Activated T-helper 2 cell treated with anti-CD3 and anti-CD28 coated beads, Interferon-gamma antibody, Interleukin-2, Interleukin-4, amounts not matched to agents 10 μg/mL and 5 μg/mL and 100 μg/mL, durations not matched to agents 14 hours and 24 hours and 36 hours (primary cell): ENCODE measurements at regions of chr3 and their contacts with region 1.

Region 1: GRCh38 chr3:72818092-72818773 is 30.0 kb downstream of the SHQ1 start:
- DNase-seq: no peak
- H3K4me3 Mint-ChIP-seq: no peak overlapping the region
- H3K27ac Mint-ChIP-seq: no peak overlapping the region
- H3K4me1 Mint-ChIP-seq: peaks cover 40% of the 10 kb centered on the region
- H3K27me3 Mint-ChIP-seq: no peaks in the 10 kb centered on the region

Region 2: GRCh38 chr3:71710906-71711494 is 1107.2 kb before region 1 on chr3:
- intact Hi-C with region 1: loop called (anchors 5 kb)
- DNase-seq: no peak
- H3K4me3 Mint-ChIP-seq: no peak overlapping the region
- H3K27ac Mint-ChIP-seq: no peak overlapping the region
- H3K4me1 Mint-ChIP-seq: peaks cover 40% of the 10 kb centered on the region
- H3K27me3 Mint-ChIP-seq: no peaks in the 10 kb centered on the region

Region 3: GRCh38 chr3:71930056-71930991 is 887.9 kb before region 1 on chr3:
- intact Hi-C with region 1: loop called (anchors 5 kb)
- DNase-seq: no peak
- H3K4me3 Mint-ChIP-seq: no peak overlapping the region
- H3K27ac Mint-ChIP-seq: no peak overlapping the region
- H3K4me1 Mint-ChIP-seq: peaks cover 6% of the 10 kb centered on the region
- H3K27me3 Mint-ChIP-seq: peaks cover 8% of the 10 kb centered on the region

Region 4: DNA sequence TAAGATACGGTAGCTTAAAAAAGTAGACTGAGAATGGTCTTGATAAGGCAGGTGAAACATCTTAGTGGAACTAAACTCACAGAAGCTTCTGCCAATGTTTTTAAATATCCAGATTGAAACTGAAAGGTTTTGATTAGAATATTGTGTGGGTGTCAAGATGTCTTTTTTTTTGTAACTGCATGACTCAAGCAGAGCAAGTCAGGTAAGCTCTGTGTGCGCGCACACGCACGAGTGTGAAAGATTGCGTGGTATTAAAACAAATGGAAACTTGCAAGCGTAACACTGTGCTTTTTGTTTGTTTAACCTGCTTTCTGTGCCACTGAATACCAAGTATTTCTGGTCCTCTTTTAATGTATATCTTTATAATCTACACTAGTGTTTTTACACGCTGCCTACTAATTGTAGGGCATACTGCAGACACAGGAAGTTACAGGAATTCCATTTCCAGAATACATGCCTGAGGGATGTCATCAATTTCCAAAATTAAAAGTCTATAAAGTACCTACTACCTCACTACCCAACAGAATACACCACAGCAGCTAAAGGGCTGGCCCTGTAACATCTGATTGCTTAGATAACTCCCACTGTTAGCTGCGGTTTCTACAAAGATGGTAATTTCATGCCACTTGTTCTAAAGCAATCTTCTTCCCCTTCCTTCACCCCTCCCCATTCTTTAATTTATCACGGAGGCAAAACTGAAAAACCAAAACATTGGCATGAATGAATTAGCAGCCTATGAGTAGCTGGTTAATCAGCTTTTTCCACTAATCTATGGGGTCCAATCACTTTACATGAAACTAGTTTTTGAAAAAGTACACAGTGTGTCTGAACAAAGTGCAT is 442.8 kb before region 1 on chr3:
- intact Hi-C with region 1: loop called (anchors 10 kb)
- DNase-seq: no peak
- H3K4me3 Mint-ChIP-seq: peak overlapping the region; percentile 54
- H3K27ac Mint-ChIP-seq: peak overlapping the region; percentile 86
- H3K4me1 Mint-ChIP-seq: peaks cover 61% of the 10 kb centered on the region
- H3K27me3 Mint-ChIP-seq: no peaks in the 10 kb centered on the region

Region 5: GRCh38 chr3:72482589-72483321 is 335.5 kb before region 1 on chr3:
- intact Hi-C with region 1: loop called (anchors 5 kb)
- DNase-seq: peak; percentile 63
- H3K4me3 Mint-ChIP-seq: peak overlapping the region; percentile 61
- H3K27ac Mint-ChIP-seq: peak overlapping the region; percentile 90
- H3K4me1 Mint-ChIP-seq: peaks cover 76% of the 10 kb centered on the region
- H3K27me3 Mint-ChIP-seq: no peaks in the 10 kb centered on the region

Region 6: GRCh38 chr3:72722930-72723726 is 95.1 kb before region 1 on chr3:
- intact Hi-C with region 1: loop called (anchors 2 kb)
- DNase-seq: no peak
- H3K4me3 Mint-ChIP-seq: no peak overlapping the region
- H3K27ac Mint-ChIP-seq: peak overlapping the region; percentile 54
- H3K4me1 Mint-ChIP-seq: peaks cover 19% of the 10 kb centered on the region
- H3K27me3 Mint-ChIP-seq: peaks cover 3% of the 10 kb centered on the region